ENCODE measurements at regions of chr1 and their contacts with region 1.

Region 1: DNA sequence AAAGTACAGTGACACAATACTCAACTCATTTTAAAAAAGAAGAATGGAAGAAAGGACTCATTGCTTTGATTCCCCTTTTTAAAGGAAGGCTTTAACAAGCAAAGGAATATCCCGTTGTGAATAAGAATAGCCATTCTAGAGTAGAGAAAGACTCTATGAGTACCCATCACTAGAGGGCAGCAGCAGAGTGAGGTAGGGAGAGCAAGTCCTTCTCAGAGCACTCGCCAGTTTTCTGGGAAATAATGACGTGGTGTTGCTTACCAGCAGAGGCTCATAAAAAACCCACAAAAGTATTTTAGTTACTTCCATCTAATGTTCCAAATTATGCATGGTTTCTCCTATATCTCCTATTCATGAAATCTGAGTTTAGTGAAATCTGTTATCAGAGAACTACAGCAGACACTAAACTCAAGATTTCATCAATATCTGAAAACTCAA is 74.6 kb downstream of the USP24 start:
- DNase-seq: peak; percentile 93
- H3K4me3 Mint-ChIP-seq: peak overlapping the region; percentile 6
- H3K27ac Mint-ChIP-seq: peak overlapping the region; percentile 52
- H3K4me1 Mint-ChIP-seq: peaks cover 13% of the 10 kb centered on the region
- H3K27me3 Mint-ChIP-seq: no peaks in the 10 kb centered on the region

Region 2: GRCh38 chr1:55127827-55128343 is 12.7 kb before region 1 on chr1:
- intact Hi-C with region 1: loop called (anchors 1 kb)
- DNase-seq: peak; percentile 69
- H3K4me3 Mint-ChIP-seq: peak overlapping the region; percentile 48
- H3K27ac Mint-ChIP-seq: peak overlapping the region; percentile 85
- H3K4me1 Mint-ChIP-seq: peaks cover 21% of the 10 kb centered on the region
- H3K27me3 Mint-ChIP-seq: no peaks in the 10 kb centered on the region

Region 3: GRCh38 chr1:55337801-55338447 is 197.4 kb after region 1 on chr1:
- intact Hi-C with region 1: loop called (anchors 5 kb)
- DNase-seq: peak; percentile 72
- H3K4me3 Mint-ChIP-seq: no peak overlapping the region
- H3K27ac Mint-ChIP-seq: no peak overlapping the region
- H3K4me1 Mint-ChIP-seq: peaks cover 7% of the 10 kb centered on the region
- H3K27me3 Mint-ChIP-seq: peaks cover 5% of the 10 kb centered on the region